Activated CD4-positive, alpha-beta T cell treated with anti-CD3 and anti-CD28 coated beads for 36 hours (primary cell): ENCODE measurements at regions of chr17 and their contacts with region 1.

Region 1: GRCh38 chr17:4939796-4940624 is at the starts of genes RNF167 and SLC25A11:
- DNase-seq: peak; percentile 98
- ATAC-seq: peak; percentile 83
- H3K4me3 Mint-ChIP-seq: peak within 1 kb of the TSS; percentile 99
- H3K27ac Mint-ChIP-seq: peak within 1 kb of the TSS; percentile 97
- H3K4me1 Mint-ChIP-seq: peaks cover 54% of the 10 kb centered on the region
- H3K27me3 Mint-ChIP-seq: no peaks in the 10 kb centered on the region
- total RNA-seq, gene RNF167: 147 to 189 TPM
- total RNA-seq, gene SLC25A11: 74.2 to 77.9 TPM

Region 2: GRCh38 chr17:3965118-3965803 is 974.7 kb before region 1 on chr17:
- CTCF ChIA-PET with region 1: no interaction called
- POLR2A ChIA-PET with region 1: no interaction called
- intact Hi-C with region 1: loop called in 1 of 2 experiments (anchors 10 kb)
- DNase-seq: peak; percentile 86
- ATAC-seq: peak; percentile 75
- H3K4me3 Mint-ChIP-seq: peak overlapping the region; percentile 81
- H3K27ac Mint-ChIP-seq: peak overlapping the region; percentile 93
- H3K4me1 Mint-ChIP-seq: peaks cover 40% of the 10 kb centered on the region
- H3K27me3 Mint-ChIP-seq: no peaks in the 10 kb centered on the region

Region 3: DNA sequence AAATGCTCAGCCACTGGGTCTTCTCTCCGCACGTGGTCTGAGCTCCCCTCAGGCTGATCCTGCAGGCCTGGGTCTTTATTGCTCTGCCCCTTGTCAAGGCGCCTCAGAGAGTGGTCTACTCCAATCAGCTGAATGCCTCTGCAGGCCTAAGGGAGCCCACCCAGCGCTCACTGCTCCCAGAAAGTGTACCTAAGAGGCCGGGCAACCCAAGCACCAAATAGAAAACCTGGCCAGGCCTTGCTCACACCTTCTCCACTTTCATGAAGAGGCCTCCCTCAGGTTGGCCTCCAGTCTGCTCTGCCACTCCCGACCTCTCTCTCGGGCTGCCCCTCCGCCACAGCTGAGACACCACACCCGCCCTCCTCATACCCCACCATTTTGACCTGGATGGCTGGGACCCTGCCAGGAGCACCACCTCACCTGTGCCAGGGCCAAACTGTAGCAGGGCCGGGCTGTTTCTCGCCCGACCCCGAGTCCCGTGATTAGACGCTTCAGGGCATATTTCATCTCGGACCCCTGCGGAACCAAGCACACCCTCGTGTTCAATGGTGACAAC is 385.5 kb before region 1 on chr17:
- CTCF ChIA-PET with region 1: no interaction called
- POLR2A ChIA-PET with region 1: no interaction called
- intact Hi-C with region 1: no loop called
- DNase-seq: no peak
- ATAC-seq: peak; percentile 5
- H3K4me3 Mint-ChIP-seq: peak overlapping the region; percentile 93
- H3K27ac Mint-ChIP-seq: peak overlapping the region; percentile 96
- H3K4me1 Mint-ChIP-seq: peaks cover 21% of the 10 kb centered on the region
- H3K27me3 Mint-ChIP-seq: no peaks in the 10 kb centered on the region

Region 4: GRCh38 chr17:4565209-4566141 is 374.5 kb before region 1 on chr17:
- CTCF ChIA-PET with region 1: no interaction called
- POLR2A ChIA-PET with region 1: no interaction called
- intact Hi-C with region 1: loop called in 1 of 2 experiments (anchors 5 kb)
- DNase-seq: peak; percentile 78
- ATAC-seq: peak; percentile 69
- H3K4me3 Mint-ChIP-seq: no peak overlapping the region
- H3K27ac Mint-ChIP-seq: no peak overlapping the region
- H3K4me1 Mint-ChIP-seq: peaks cover 38% of the 10 kb centered on the region
- H3K27me3 Mint-ChIP-seq: peaks cover 2% of the 10 kb centered on the region

Region 5: DNA sequence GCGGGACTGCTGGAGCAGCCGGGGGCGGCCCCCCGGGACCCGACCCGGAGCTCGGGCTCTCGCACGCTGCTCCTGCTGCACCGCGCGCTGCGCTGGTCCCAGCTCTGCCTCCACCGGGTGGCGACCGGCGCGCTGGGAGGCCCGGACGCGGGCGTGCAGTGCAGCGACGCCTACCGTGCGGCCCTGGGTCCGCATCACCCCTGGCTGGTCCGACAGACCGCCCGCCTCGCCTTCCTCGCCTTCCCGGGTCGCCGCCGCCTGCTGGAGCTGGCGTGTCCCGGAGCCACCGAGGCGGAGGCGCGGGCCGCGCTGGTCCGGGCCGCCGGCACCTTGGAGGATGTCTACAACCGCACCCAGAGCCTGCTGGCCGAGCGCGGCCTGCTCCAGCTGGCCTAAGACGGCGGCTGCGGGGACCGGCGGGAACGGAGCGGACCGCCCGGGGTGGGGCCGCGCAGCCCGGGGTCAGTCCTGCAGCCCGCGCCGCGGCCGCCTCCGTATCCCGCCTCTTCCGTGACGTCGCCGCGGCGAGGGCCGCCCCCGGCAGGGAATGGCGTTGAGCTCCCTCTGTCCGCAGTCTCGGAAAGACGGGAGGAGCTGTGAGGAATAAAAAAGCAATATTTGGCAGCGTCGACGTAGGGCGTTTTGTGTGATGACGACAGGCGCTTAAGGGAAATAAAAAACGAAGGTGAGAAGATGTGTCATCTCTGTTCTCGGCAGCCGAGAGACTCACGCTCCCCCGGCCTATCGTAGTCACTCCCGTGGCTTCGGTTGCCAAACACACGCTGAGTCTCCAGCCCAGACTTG is 149.9 kb before region 1 on chr17:
- CTCF ChIA-PET with region 1: interaction called, 5 read pairs
- POLR2A ChIA-PET with region 1: no interaction called
- intact Hi-C with region 1: loop called (anchors 2 to 5 kb)
- DNase-seq: peak; percentile 92
- ATAC-seq: peak; percentile 91
- H3K4me3 Mint-ChIP-seq: peak overlapping the region; percentile 64
- H3K27ac Mint-ChIP-seq: peak overlapping the region; percentile 93
- H3K4me1 Mint-ChIP-seq: peaks cover 25% of the 10 kb centered on the region
- H3K27me3 Mint-ChIP-seq: peaks cover 34% of the 10 kb centered on the region

Region 6: GRCh38 chr17:4903051-4903818 is 36.8 kb before region 1 on chr17 and contains the start of gene CHRNE:
- CTCF ChIA-PET with region 1: interaction called, 10 read pairs
- POLR2A ChIA-PET with region 1: interaction called, 8 read pairs
- intact Hi-C with region 1: loop called (anchors 1 to 5 kb)
- DNase-seq: peak; percentile 89
- ATAC-seq: peak; percentile 44
- H3K4me3 Mint-ChIP-seq: peak within 1 kb of the TSS; percentile 65
- H3K27ac Mint-ChIP-seq: peak within 1 kb of the TSS; percentile 72
- H3K4me1 Mint-ChIP-seq: peaks cover 26% of the 10 kb centered on the region
- H3K27me3 Mint-ChIP-seq: no peaks in the 10 kb centered on the region
- total RNA-seq, gene CHRNE: 0.59 to 0.84 TPM

Region 7: GRCh38 chr17:4986951-4987766 is 47.1 kb after region 1 on chr17 and contains the start of gene CAMTA2:
- CTCF ChIA-PET with region 1: interaction called, 3 read pairs
- POLR2A ChIA-PET with region 1: interaction called, 3 read pairs
- intact Hi-C with region 1: loop called in 1 of 2 experiments (anchors 1 kb)
- DNase-seq: peak; percentile 91
- ATAC-seq: peak; percentile 87
- H3K4me3 Mint-ChIP-seq: peak within 1 kb of the TSS; percentile 93
- H3K27ac Mint-ChIP-seq: peak within 1 kb of the TSS; percentile 91
- H3K4me1 Mint-ChIP-seq: peaks cover 33% of the 10 kb centered on the region
- H3K27me3 Mint-ChIP-seq: no peaks in the 10 kb centered on the region
- total RNA-seq, gene CAMTA2: 98.2 to 124 TPM

Region 8: GRCh38 chr17:5049314-5049895 is 109.4 kb after region 1 on chr17:
- CTCF ChIA-PET with region 1: no interaction called
- POLR2A ChIA-PET with region 1: no interaction called
- intact Hi-C with region 1: no loop called
- DNase-seq: peak; percentile 70
- ATAC-seq: peak; percentile 87
- H3K4me3 Mint-ChIP-seq: no peak overlapping the region
- H3K27ac Mint-ChIP-seq: peak overlapping the region; percentile 81
- H3K4me1 Mint-ChIP-seq: peaks cover 44% of the 10 kb centered on the region
- H3K27me3 Mint-ChIP-seq: no peaks in the 10 kb centered on the region

Region 9: GRCh38 chr17:5419356-5419958 is 479.4 kb after region 1 on chr17 and contains the start of gene NUP88:
- CTCF ChIA-PET with region 1: no interaction called
- POLR2A ChIA-PET with region 1: interaction called, 3 read pairs
- intact Hi-C with region 1: loop called in 1 of 2 experiments (anchors 2 kb)
- DNase-seq: peak; percentile 98
- ATAC-seq: peak; percentile 95
- H3K4me3 Mint-ChIP-seq: peak within 1 kb of the TSS; percentile 98
- H3K27ac Mint-ChIP-seq: peak within 1 kb of the TSS; percentile 100
- H3K4me1 Mint-ChIP-seq: peaks cover 41% of the 10 kb centered on the region
- H3K27me3 Mint-ChIP-seq: no peaks in the 10 kb centered on the region
- total RNA-seq, gene NUP88: 135 to 199 TPM